WTC11 (cell line): ENCODE measurements at regions of chr1 and their contacts with region 1.

Region 1: GRCh38 chr1:220326578-220326977 is 54.3 kb upstream of the RAB3GAP2 start:
- DNase-seq: no peak
- ATAC-seq: peak; percentile 79
- H3K4me3 Mint-ChIP-seq: no peak overlapping the region
- H3K27ac Mint-ChIP-seq: no peak overlapping the region; the same call in 1 of the 2 replicates
- H3K4me1 Mint-ChIP-seq: peaks cover 39% of the 10 kb centered on the region
- H3K27me3 Mint-ChIP-seq: no peaks in the 10 kb centered on the region
- CTCF ChIP-seq: no peak

Region 2: DNA sequence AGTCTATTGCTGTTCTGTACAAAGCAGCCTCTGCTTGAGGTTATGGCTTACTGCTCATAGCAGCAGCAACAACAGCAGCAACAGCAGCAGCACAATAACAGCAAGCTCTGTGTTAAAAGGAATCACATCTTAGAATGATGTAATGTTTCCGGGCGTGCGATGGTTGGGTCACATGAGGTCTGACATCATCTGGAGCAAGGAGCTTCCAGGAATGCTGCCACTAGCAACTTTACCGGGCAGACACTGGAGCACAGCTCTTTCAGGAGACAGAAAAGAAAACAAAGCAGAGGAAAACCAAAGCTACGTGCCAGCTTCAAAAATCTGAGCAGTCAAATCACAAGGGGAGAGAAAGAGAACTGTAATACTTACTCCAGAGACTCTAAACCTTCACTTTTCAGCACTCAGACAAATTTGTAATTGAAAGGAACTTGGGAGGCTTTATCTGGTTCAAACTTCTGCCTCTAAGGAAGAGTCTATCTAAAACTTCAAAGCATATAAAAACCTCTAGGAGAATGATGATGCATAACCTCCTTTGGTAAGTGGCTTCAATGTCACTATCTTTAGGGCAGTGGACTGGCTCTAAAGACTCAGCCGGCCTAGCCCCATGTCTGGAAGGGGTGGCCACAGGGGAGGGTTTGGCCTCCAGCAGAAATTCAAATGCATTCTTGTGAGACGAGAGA is 26.0 kb before region 1 on chr1:
- CTCF ChIA-PET with region 1: interaction called, 14 read pairs
- POLR2A ChIA-PET with region 1: no interaction called
- DNase-seq: no peak
- ATAC-seq: peak; percentile 50
- H3K4me3 Mint-ChIP-seq: no peak overlapping the region
- H3K27ac Mint-ChIP-seq: peak overlapping the region; percentile 89
- H3K4me1 Mint-ChIP-seq: peaks cover 27% of the 10 kb centered on the region
- H3K27me3 Mint-ChIP-seq: no peaks in the 10 kb centered on the region
- CTCF ChIP-seq: no peak